CD4-positive, alpha-beta T cell (primary cell): ENCODE measurements at regions of chr11 and their contacts with region 1.

Region 1: DNA sequence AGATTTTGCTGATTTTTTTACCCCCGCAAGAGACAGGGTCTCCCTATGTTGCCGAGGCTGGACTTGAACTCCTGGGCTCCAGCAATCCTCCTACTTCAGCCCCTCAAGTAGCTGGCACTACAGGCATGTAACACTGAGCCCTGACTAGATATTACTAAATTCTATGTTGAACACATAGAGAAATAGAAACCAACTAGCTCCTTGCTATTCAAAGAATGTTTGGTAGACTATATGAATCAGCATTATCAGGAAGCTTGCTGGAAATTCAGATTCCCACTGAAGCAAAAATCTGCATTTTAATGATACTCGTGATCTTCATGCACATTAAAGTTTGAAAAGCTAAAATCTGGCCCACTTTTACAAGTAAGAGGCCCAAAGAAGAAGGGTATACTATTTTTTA is 11.9 kb downstream of the TMEM41B start:
- DNase-seq: no peak
- ATAC-seq: no peak
- H3K4me3 ChIP-seq: no peak overlapping the region
- H3K4me3 Mint-ChIP-seq: no peak overlapping the region
- H3K27ac ChIP-seq: no peak overlapping the region
- H3K27ac Mint-ChIP-seq: no peak overlapping the region
- H3K4me1 ChIP-seq: no peaks in the 10 kb centered on the region
- H3K4me1 Mint-ChIP-seq: peaks cover 18% of the 10 kb centered on the region
- H3K27me3 ChIP-seq: no peaks in the 10 kb centered on the region
- H3K27me3 Mint-ChIP-seq: no peaks in the 10 kb centered on the region
- CTCF ChIP-seq: no peak

Region 2: DNA sequence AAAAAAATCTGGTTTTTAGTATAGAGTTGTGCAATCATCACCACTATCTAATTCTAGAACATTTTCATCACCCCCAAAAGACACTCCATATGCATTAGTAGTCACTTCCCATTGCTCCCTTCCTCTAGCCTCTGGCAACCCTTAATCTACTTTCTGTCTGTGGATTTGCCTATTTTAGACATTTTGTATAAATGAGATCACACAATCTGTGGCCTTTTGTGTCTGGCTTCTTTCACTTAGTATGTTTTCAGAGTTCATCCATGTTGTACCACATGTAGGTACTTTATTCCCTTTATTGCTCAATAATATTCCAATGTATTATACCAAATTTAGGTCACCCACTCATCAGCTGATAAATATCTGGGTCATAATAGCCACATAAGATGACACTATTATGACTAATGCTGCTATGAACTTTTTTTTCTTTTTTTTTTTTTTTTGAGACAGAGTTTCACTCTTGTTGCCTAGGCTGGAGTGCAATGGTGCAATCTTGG is 143.5 kb before region 1 on chr11:
- CTCF ChIA-PET with region 1: no interaction called
- POLR2A ChIA-PET with region 1: no interaction called
- intact Hi-C with region 1: no loop called
- DNase-seq: peak in 2 of 14 experiments; percentile 17 to 30
- ATAC-seq: no peak
- H3K4me3 ChIP-seq: no peak overlapping the region
- H3K4me3 Mint-ChIP-seq: no peak overlapping the region
- H3K27ac ChIP-seq: no peak overlapping the region
- H3K27ac Mint-ChIP-seq: peak overlapping the region; percentile 1
- H3K4me1 ChIP-seq: no peaks in the 10 kb centered on the region
- H3K4me1 Mint-ChIP-seq: no peaks in the 10 kb centered on the region
- H3K27me3 ChIP-seq: no peaks in the 10 kb centered on the region
- H3K27me3 Mint-ChIP-seq: no peaks in the 10 kb centered on the region
- CTCF ChIP-seq: no peak

Region 3: GRCh38 chr11:9280655-9281301 is 21.7 kb before region 1 on chr11:
- CTCF ChIA-PET with region 1: no interaction called
- POLR2A ChIA-PET with region 1: no interaction called
- intact Hi-C with region 1: loop called in 1 of 2 experiments (anchors 1 kb)
- DNase-seq: peak in 13 of 14 experiments; percentile 27 to 85 (median 42)
- ATAC-seq: peak; percentile 92
- H3K4me3 ChIP-seq: peak overlapping the region; percentile 23
- H3K4me3 Mint-ChIP-seq: peak overlapping the region; percentile 67
- H3K27ac ChIP-seq: peak overlapping the region in 1 of 2 donors; percentile 29
- H3K27ac Mint-ChIP-seq: peak overlapping the region; percentile 72
- H3K4me1 ChIP-seq: peaks cover 13% of the 10 kb centered on the region
- H3K4me1 Mint-ChIP-seq: peaks cover 18% of the 10 kb centered on the region
- H3K27me3 ChIP-seq: no peaks in the 10 kb centered on the region
- H3K27me3 Mint-ChIP-seq: no peaks in the 10 kb centered on the region
- CTCF ChIP-seq: no peak